Calu3 (cell line): ENCODE measurements at regions of chr20 and their contacts with region 1.

Region 1: DNA sequence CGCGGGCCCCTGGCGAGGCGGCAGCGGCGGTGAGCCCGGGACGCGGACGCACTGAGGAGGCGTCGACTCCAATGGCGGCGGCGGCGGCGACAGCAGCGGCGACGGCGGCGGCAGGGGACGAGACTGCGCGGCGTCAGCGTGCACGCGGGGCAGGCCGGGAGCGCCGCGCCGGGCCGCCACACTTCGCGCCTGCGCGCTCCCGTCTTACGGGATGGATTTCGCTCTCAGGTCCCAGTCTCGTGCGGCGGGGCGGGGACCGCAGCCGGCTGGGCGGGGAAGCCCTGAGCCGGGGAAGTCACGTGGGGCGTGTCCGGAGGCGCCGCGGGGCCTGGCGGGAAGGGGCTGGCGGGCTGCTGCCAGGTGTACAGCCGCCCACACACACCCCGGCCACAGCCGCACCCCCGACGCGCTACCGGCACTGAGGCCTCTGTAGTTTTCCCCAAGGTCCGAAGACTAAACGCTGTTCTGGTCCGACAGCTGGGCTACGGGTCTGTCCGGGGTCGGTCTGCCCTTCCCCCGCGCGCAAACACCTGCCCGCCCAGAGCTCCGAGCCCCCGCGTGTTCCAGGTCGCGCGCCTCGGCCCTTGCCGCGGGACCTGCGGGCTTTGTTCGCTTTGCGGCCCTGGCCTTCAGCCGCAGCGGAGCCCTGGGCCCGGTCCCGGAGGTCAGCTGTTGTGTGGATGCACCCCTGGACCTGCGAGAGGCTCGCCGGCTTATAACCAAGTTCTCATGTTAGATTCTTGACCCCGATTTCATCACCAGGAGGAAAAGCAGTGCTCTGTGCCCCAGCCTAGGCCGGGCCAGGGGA is at the start of gene YTHDF1:
- DNase-seq: peak; percentile 100
- H3K4me3 Mint-ChIP-seq: peak within 1 kb of the TSS; percentile 93
- H3K27ac Mint-ChIP-seq: peak within 1 kb of the TSS; percentile 73
- H3K4me1 Mint-ChIP-seq: peaks cover 48% of the 10 kb centered on the region
- H3K27me3 Mint-ChIP-seq: peaks cover 19% of the 10 kb centered on the region
- CTCF ChIP-seq: no peak
- total RNA-seq, gene YTHDF1: 93.4 and 94.4 TPM in 2 replicates

Region 2: GRCh38 chr20:63196768-63197470 is 19.3 kb before region 1 on chr20:
- CTCF ChIA-PET with region 1: interaction called, 10 read pairs
- intact Hi-C with region 1: no loop called
- DNase-seq: no peak
- H3K4me3 Mint-ChIP-seq: no peak overlapping the region
- H3K27ac Mint-ChIP-seq: no peak overlapping the region
- H3K4me1 Mint-ChIP-seq: peaks cover 26% of the 10 kb centered on the region
- H3K27me3 Mint-ChIP-seq: no peaks in the 10 kb centered on the region
- CTCF ChIP-seq: no peak